Astrocyte of the cerebellum (primary cell): ENCODE measurements at regions of chr11 and their contacts with region 1.

Region 1: DNA sequence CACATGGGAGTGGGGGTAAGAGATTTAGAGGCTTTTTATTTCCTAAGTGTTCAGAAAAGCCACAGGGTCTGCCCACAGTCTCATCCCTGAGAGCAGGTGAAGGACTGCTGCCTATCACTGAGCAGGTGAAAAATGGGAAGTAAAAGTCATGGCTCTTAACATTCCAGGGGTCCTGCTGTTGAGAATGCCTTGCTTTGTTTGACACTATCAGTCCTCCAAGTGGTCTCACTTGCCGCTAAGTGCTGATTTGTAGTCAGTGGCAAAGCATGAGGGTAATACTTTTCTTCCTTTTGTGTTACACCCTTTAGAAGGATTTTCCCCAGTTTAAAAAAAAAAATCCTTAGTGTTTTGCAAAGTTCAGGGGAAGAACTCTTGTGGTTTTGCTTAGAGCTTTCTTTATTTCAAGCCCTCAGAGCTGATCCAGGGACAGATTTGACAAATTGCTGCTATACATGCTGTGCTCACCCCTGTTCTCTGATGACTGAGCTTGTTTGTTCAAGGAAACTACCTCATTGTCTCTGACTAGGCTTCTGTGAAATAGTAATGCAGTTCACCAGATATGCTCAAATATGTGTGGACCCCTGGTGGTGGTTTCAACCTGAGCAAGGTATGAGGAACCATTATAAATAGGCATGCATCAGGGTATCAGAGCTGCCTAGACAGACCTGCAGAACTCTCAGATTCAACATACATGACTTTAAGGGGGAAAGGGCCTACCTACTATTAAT is 141.0 kb downstream of the ARHGAP42 start:
- DNase-seq: peak; percentile 89
- H3K4me3 ChIP-seq: no peak overlapping the region
- CTCF ChIP-seq: peak; percentile 51

Region 2: GRCh38 chr11:100575870-100576705 is 252.0 kb before region 1 on chr11:
- in situ Hi-C with region 1: loop called (anchors 25 kb)
- DNase-seq: peak; percentile 50
- H3K4me3 ChIP-seq: no peak overlapping the region
- CTCF ChIP-seq: peak; percentile 61

Region 3: DNA sequence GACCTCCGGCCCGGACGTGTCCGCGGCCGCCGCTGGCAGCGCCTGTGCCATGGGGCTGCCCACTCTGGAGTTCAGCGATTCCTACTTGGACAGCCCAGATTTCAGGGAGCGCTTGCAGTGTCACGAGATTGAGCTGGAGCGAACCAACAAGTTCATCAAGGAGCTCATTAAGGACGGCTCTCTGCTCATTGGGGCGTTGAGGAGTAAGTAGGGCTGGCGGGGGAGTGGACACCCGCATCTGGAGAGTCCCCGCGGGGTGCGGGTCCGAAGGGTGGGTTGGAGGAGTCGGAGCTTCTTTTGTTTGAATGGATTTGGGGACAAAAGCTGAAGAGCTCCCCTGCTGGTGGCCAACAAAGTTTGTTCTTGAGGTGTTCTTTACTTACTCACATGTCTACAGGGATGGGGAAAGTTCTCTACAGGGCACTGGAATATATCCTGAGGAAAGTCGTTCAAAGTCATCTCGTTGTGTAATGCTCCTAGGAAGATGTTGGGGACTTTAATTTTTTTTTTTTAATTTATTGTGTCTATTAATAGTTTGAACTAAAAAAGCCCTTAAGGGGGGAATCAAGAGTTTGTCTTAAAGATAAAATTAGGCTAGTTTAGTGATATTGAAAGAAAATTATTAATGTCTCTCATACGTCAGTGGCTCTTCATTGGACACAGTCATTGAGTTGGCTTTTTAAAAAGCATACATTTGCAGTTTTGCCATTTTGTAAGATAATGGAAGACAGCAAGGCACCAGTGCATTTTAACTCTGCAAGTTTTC is 140.3 kb before region 1 on chr11:
- in situ Hi-C with region 1: loop called (anchors 25 kb)
- DNase-seq: peak; percentile 76
- H3K4me3 ChIP-seq: peak overlapping the region; percentile 68
- CTCF ChIP-seq: peak; percentile 78

Region 4: GRCh38 chr11:100863080-100863581 is 35.0 kb after region 1 on chr11:
- in situ Hi-C with region 1: no loop called
- DNase-seq: peak; percentile 95
- H3K4me3 ChIP-seq: no peak overlapping the region
- CTCF ChIP-seq: no peak